ENCODE measurements at regions of chr10 and their contacts with region 1.

Region 1: DNA sequence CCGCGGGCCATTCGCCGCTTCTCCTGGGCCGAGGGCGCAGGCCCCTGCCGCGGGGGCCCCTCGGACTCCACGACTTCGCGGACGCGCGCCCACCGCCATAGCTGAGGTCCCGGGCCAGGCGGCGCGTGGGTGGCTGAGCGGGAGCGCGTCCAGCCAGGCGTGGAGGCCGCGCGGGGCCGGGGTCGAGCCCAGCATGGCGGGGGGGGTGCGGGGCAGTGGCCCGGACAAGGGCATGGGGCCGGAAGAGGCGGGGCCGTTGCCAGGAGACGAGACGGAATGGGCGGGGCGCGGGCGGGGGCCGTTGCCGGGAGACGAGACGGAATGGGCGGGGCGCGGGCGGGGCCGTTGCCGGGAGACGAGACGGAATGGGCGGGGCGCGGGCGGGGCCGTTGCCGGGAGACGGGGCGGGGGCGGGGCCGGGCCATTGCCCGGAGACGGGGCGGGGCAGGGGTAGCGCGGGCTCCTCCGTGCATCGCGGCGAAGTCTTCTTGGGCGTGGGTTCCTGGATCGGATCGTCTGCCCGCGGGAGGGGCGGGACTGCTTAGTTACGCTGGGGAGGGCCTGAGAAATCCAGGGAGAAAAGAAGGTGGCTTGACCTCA is 14.8 kb downstream of the ADAM8 start:
- DNase-seq: no peak
- H3K4me3 ChIP-seq: peak overlapping the region; percentile 54
- H3K27ac ChIP-seq: no peak overlapping the region
- H3K27me3 ChIP-seq: no peaks in the 10 kb centered on the region
- CTCF ChIP-seq: no peak

Region 2: GRCh38 chr10:132888898-132889490 is 372.8 kb before region 1 on chr10:
- CTCF ChIA-PET with region 1: no interaction called
- POLR2A ChIA-PET with region 1: interaction called, 10 read pairs
- DNase-seq: no peak
- H3K4me3 ChIP-seq: no peak overlapping the region
- H3K27ac ChIP-seq: no peak overlapping the region
- H3K27me3 ChIP-seq: peaks cover 20% of the 10 kb centered on the region
- CTCF ChIP-seq: no peak

Region 3: DNA sequence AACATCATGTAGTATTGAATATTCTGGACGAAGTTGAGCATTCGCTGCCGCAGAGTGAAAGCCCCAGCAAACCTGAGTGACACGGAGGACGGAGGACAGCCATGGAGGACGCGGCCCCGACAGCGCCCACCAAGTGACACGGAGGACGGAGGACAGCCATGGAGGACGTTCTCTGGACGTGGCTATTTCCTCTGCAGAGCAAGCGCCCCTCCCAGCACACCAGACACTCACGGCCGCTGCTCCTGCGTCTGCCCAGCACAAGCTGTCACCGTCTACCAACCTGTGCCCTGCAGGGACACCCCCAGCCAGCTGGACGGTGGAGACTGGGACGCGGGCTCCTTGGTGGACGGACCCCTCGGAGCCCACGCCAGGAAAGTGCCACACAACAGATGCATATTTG is 22.1 kb after region 1 on chr10:
- CTCF ChIA-PET with region 1: no interaction called
- POLR2A ChIA-PET with region 1: no interaction called
- DNase-seq: no peak
- H3K4me3 ChIP-seq: no peak overlapping the region
- H3K27ac ChIP-seq: no peak overlapping the region
- H3K27me3 ChIP-seq: no peaks in the 10 kb centered on the region
- CTCF ChIP-seq: no peak